Left colon (tissue), 2 donors: ENCODE measurements at regions of chr17 and their contacts with region 1.

Region 1: GRCh38 chr17:46179375-46179999 is 13.7 kb downstream of the KANSL1 start:
- DNase-seq: no peak
- ATAC-seq: no peak

Region 2: DNA sequence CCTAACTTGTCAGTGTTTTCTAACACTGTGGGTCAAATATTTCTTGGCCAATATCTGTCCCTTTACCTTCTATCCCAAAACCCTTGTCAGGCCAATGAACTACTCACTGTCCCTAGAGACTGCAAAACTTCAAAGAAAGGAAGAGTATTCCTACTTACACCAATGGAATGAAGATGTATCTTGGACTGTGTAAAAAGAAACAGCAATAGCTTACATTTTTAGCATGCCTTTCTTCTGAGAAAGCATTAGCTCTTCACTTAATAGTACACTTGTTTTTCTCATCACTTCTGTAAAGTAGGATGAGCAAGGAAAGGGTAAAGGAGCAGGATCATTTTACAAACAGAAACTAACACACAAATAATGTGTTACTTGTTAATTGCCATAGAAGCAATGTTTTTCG is 106.5 kb before region 1 on chr17:
- intact Hi-C with region 1: no loop called
- DNase-seq: no peak
- ATAC-seq: no peak

Region 3: DNA sequence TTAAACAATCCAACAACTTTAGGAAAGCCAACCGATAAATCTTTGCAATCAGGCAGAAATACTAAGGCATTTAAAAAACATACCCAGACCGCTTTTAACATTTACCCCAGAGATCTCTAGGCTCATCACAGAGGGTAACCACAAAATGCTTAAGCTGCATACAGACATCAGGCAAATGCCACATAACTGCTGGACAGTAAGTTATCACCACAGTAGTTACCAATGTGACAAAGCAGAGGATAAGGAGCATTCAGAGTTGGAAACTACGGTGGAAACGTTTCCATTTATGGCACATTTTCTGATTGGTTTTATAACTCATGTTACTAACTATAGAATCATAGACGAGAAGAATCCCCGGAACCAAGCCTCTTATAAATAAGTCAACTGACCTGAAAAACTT is 63.8 kb before region 1 on chr17:
- intact Hi-C with region 1: loop called in 1 of 2 experiments (anchors 10 kb)
- DNase-seq: no peak
- ATAC-seq: no peak